ENCODE measurements at regions of chr6 and their contacts with region 1.

Region 1: DNA sequence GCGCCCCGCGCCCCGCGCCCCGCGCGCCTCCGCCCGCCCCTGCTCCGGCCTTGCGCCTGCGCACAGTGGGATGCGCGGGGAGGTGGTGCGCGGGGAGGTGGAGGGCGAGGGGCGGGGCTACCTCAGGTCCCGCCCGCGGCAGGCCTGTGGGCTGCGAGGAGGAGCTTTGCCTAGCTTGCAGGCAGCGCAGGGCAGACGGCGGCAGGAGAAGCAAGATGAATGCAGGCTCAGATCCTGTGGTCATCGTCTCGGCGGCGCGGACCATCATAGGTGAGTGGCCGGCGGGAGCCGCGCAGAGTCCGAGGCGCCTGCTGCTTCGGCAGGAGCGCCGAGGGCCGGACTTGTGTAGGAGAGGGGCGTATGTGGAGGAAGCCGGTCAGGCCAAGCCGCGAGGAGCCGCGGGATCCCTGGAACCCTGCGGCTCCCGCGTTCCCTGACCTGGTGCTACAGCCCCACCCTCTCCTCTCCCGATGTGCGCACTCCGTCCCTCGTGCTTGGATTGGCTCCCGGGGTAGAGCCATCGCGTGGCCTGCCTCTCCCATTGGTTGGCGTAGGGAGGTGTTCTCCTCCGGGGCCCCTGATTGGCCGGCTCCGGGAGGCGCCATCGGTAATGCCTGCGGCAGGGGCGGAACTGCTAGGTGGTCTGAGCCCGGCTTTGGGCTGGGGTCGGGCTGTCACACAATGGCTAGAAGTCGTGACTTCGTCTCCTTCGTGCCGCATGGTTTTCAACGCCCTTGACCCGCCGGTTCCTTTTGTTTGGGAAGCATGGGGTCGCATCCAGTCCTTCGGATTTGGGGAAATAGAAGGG is at the start of gene ACAT2:
- DNase-seq: peak; percentile 96
- ATAC-seq: peak; percentile 97
- H3K4me3 Mint-ChIP-seq: peak within 1 kb of the TSS; percentile 95
- H3K27ac Mint-ChIP-seq: peak within 1 kb of the TSS; percentile 95
- H3K4me1 Mint-ChIP-seq: peaks cover 27% of the 10 kb centered on the region
- H3K27me3 Mint-ChIP-seq: no peaks in the 10 kb centered on the region
- total RNA-seq, gene ACAT2: 55.0 to 82.1 TPM

Region 2: DNA sequence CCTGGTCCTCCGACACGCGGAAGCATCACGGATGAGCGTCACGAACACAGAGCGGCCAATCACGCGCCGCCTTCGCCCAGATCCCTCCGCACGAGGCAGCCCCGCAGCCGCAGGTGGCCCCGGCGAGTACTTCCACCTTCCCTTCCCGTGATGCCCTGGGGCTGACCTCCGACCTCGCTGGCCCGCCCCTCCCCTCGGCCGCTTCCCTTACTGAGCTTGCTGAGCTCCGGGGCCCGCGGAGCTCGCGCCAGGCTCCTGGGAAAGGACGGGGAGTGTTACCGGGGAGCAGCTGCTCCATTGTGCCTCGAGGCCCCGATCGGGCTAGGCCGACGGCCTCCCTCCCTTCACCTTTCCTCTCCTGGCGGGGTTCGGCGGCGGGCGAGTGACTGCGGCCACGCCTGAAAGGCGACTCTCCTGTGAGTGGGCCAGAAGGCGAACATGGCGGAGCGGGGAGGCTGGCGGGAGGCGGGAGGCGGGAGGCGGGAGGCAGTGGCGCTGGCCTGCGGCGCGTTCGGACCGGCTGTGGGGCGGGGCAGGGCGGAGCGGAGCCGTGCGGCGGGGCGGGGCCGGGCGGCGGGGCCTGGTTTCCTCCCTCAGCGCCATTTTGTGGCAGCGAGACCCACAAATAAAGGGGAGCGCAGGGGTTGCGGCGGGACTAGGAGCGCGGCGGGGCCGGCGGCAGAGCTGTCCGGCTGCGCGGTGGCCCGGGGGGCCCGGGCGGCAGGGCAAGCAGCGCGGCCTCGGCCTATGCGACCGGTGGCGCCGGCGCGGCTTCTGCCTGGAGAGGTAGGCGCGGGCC is 35.0 kb before region 1 on chr6 and contains the start of gene WTAP:
- CTCF ChIA-PET with region 1: interaction called, 7 read pairs
- POLR2A ChIA-PET with region 1: interaction called, 12 read pairs
- intact Hi-C with region 1: loop called (anchors 1 kb)
- DNase-seq: peak; percentile 99
- ATAC-seq: peak; percentile 91
- H3K4me3 Mint-ChIP-seq: peak within 1 kb of the TSS; percentile 95
- H3K27ac Mint-ChIP-seq: peak within 1 kb of the TSS; percentile 98
- H3K4me1 Mint-ChIP-seq: peaks cover 47% of the 10 kb centered on the region
- H3K27me3 Mint-ChIP-seq: no peaks in the 10 kb centered on the region
- total RNA-seq, gene WTAP: 87.2 to 91.5 TPM

Measured in activated CD4-positive, alpha-beta T cell treated with anti-CD3 and anti-CD28 coated beads for 36 hours (primary cell).